ENCODE measurements at regions of chr1 and their contacts with region 1.

Region 1: DNA sequence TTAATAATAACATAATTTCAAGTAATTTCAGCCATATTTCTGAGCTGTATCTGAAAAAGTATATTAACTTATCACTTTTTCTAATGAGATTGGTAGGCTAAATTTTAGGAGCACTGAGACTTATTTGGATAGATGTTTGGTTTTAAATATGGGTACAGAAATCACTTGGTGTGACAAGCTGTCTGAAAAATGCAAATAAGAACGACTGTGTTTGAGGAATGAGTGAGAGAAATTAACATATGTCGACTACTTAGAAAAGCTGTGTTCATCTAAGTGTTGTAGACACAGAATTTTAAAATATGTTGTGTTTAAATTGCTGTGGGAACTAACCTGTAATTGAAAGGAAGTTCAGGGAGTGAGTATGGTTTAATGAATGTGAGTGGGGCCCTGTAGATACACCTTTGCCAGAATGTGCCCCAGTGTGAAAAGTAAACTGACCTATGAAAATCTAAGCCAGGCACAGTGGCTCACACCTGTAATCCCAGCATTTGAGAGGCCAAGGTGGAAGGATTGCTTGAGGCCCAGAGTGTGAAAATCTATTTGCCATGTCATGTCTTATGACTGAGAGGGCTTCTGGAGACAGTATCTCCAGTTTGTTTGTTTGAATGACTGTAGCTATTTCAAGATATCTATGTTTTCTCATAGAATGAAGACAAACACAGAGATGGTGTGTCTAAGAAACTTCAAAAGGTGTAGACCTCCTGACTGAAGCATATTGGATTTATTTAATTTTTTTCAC is 53.8 kb upstream of the LRRC8C start:
- DNase-seq: no peak
- H3K4me3 Mint-ChIP-seq: no peak overlapping the region
- H3K27ac Mint-ChIP-seq: no peak overlapping the region
- H3K4me1 Mint-ChIP-seq: peaks cover 17% of the 10 kb centered on the region
- H3K27me3 Mint-ChIP-seq: no peaks in the 10 kb centered on the region
- CTCF ChIP-seq: no peak

Region 2: GRCh38 chr1:89556726-89557444 is 22.2 kb before region 1 on chr1:
- CTCF ChIA-PET with region 1: no interaction called
- POLR2A ChIA-PET with region 1: interaction called, 3 read pairs
- intact Hi-C with region 1: loop called (anchors 2 kb)
- DNase-seq: no peak
- H3K4me3 Mint-ChIP-seq: no peak overlapping the region
- H3K27ac Mint-ChIP-seq: no peak overlapping the region
- H3K4me1 Mint-ChIP-seq: peaks cover 9% of the 10 kb centered on the region
- H3K27me3 Mint-ChIP-seq: no peaks in the 10 kb centered on the region
- CTCF ChIP-seq: no peak

Region 3: DNA sequence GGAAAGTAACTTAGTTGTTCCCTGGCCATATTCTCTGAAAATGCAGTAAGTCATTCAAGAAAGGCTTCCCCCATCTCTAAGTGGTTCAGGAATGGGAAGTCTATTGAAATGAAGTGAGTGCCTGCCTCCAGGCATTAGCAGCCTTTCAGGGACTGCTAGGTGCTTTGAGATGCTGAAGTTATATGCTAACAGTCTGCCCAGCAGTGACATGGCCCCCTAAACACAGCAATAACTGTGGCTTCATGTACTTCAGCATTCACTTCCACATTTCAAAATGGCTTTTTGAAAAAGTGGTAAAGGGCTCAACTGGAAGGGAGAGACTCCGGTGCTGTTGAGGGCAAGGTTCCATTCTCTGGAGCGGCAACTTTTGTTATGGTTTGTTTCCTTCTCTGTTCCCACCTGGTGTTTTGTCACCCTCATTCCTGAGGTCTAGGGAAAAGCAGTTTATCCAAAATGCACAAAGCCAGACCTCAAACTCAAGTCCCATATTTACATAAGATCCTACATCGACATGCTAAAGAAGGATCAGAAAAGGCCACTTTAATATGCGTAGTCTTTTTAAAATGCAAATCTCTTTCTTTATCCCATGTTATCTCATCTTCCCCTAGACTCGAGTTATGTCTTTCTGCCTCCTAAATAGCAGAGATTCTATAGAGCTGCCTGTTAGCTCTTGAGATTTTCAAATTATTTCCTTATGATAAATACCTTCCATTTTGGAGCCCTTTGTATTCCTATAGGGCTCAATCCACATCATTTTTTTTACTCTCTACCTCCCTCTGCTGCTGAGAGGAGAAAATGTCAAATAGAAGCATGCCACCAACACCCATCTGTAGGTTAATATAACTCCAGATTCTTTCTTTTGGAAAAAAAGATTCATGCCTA is 19.6 kb after region 1 on chr1:
- CTCF ChIA-PET with region 1: interaction called, 12 read pairs
- POLR2A ChIA-PET with region 1: interaction called, 4 read pairs
- intact Hi-C with region 1: no loop called
- DNase-seq: peak; percentile 61
- H3K4me3 Mint-ChIP-seq: no peak overlapping the region
- H3K27ac Mint-ChIP-seq: no peak overlapping the region
- H3K4me1 Mint-ChIP-seq: peaks cover 21% of the 10 kb centered on the region
- H3K27me3 Mint-ChIP-seq: no peaks in the 10 kb centered on the region
- CTCF ChIP-seq: peak; percentile 53